Thyroid gland (tissue), 4 donors: ENCODE measurements at regions of chr4 and their contacts with region 1.

Region 1: GRCh38 chr4:9762823-9763475 is 18.5 kb upstream of the DRD5 start:
- DNase-seq: peak; percentile 61 to 63
- H3K4me3 ChIP-seq: no peak overlapping the region
- H3K27ac ChIP-seq: no peak overlapping the region
- H3K4me1 ChIP-seq: no peaks in the 10 kb centered on the region
- H3K27me3 ChIP-seq: no peaks in the 10 kb centered on the region
- CTCF ChIP-seq: peak in 5 of 6 experiments; percentile 16 to 87 (median 73)
- POLR2A ChIP-seq: no peak

Region 2: GRCh38 chr4:10013722-10014121 is 250.8 kb after region 1 on chr4:
- intact Hi-C with region 1: loop called (anchors 2 kb)
- DNase-seq: peak; percentile 36 to 38
- H3K4me3 ChIP-seq: no peak overlapping the region
- H3K27ac ChIP-seq: no peak overlapping the region
- H3K4me1 ChIP-seq: peaks cover 0 to 19% of the 10 kb centered on the region in 2 donors
- H3K27me3 ChIP-seq: no peaks in the 10 kb centered on the region
- CTCF ChIP-seq: peak in 4 of 6 experiments; percentile 17 to 38 (median 26)
- POLR2A ChIP-seq: no peak